ENCODE measurements at regions of chr13 and their contacts with region 1.

Region 1: DNA sequence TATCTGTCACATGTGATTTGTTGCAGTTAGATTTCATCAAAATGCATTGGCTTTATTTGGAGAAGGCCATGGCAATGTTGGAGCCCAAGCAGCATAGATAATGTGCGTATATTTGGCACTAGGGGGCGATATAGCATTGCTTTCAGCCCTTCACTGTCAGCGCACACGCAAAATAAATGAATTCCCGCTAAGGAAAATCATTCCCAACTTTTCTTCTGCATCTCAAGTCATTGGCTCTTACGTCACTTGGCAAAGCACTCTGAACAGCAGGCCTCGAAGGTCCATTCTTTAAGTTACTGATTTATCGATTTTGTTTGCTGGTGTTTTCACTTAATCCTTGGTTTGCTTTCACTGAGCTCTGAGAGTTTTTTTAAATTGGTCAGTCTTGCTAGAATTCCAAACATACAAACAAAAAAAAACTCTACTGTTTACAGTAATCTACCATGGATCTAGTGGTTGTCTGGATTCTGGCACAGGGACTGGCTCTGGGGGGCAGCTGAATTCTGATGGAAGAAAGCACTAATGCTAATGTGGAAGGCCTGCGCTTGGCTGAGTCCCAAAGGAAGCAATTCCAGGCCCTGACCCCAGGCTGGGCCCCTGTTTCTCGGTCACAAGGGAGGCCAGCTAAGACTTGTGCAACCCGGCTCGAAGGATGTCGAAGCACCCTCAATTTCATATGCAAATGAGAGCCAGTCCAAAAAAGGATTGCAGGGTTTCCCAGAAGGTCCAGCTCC is 97.7 kb upstream of the IPO5 start:
- DNase-seq: peak; percentile 47
- H3K4me3 ChIP-seq: no peak overlapping the region
- H3K27ac ChIP-seq: no peak overlapping the region
- H3K4me1 ChIP-seq: no peaks in the 10 kb centered on the region
- H3K27me3 ChIP-seq: no peaks in the 10 kb centered on the region
- CTCF ChIP-seq: peak; percentile 27 to 83 (median 74)
- POLR2A ChIP-seq: no peak

Region 2: GRCh38 chr13:96398486-96398885 is 1457.3 kb before region 1 on chr13:
- intact Hi-C with region 1: no loop called
- DNase-seq: no peak
- H3K4me3 ChIP-seq: no peak overlapping the region
- H3K27ac ChIP-seq: no peak overlapping the region
- H3K4me1 ChIP-seq: no peaks in the 10 kb centered on the region
- H3K27me3 ChIP-seq: no peaks in the 10 kb centered on the region
- CTCF ChIP-seq: no peak
- POLR2A ChIP-seq: no peak

Region 3: GRCh38 chr13:98397221-98397620 is 541.5 kb after region 1 on chr13:
- intact Hi-C with region 1: loop called (anchors 10 kb)
- DNase-seq: no peak
- H3K4me3 ChIP-seq: no peak overlapping the region
- H3K27ac ChIP-seq: no peak overlapping the region
- H3K4me1 ChIP-seq: no peaks in the 10 kb centered on the region
- H3K27me3 ChIP-seq: no peaks in the 10 kb centered on the region
- CTCF ChIP-seq: peak in 2 of 4 experiments; percentile 13 to 34
- POLR2A ChIP-seq: no peak

Region 4: DNA sequence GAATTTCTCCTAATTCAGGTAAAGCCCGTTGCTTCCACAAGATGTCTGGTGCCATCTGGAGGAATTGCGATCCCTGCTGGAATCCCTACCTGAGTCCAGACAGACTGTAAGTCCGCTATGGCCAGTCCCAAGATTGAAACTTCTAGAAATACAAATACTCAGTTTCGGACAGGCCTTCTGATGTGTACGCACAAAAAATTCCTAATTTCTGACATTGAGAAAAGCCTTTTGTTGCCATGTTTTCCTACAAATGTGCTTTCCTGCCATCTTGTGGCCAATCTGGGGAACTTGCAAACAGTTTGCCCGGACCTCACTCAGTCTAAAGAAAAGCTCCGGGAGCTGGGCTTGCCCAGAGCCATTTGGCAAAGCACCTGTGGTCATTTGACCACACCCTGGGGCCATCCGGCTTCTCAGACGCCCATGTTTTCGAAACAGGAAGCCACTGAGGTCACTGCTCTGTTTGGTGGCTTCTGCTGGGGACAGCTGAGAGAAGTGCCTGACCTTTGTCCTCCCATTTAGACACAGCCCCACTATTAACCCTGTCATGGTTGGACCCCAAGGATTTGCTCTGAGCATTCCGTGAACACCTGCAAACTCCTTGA is 817.3 kb after region 1 on chr13:
- intact Hi-C with region 1: loop called (anchors 5 kb)
- DNase-seq: peak; percentile 54
- H3K4me3 ChIP-seq: no peak overlapping the region
- H3K27ac ChIP-seq: no peak overlapping the region
- H3K4me1 ChIP-seq: no peaks in the 10 kb centered on the region
- H3K27me3 ChIP-seq: no peaks in the 10 kb centered on the region
- CTCF ChIP-seq: peak; percentile 63 to 92 (median 77)
- POLR2A ChIP-seq: no peak

Region 5: DNA sequence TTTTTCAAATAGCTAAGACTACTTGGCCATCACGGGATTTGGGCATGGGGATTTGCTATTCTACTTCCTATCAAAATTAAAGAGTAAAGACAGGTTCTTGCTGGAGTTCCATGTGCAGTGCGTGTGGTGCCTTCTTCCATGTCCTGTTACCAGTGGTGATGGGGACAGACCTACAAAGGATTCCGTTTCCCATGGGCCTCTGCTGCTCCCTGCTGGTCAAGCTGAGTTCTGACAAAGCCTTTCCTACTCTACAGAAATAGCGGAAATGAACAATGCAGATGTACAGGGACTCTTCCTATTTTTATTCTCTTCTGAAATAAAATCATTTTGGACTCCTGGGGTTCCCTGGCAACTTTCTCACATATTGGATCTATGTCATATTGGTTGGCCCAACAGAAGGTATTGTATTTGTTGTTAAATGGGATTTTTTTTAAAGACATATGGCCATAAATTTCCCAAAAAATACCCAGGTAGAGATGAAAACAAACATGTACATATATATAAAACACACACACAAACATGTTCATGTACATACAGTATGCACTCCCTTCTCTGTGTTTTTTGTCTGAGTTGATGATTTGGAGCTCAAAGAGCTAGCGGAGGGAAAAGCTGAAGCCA is 987.2 kb after region 1 on chr13:
- intact Hi-C with region 1: loop called (anchors 10 kb)
- DNase-seq: peak; percentile 46
- H3K4me3 ChIP-seq: no peak overlapping the region
- H3K27ac ChIP-seq: no peak overlapping the region
- H3K4me1 ChIP-seq: no peaks in the 10 kb centered on the region
- H3K27me3 ChIP-seq: no peaks in the 10 kb centered on the region
- CTCF ChIP-seq: peak; percentile 74 to 83 (median 76)
- POLR2A ChIP-seq: no peak